Activated CD4-positive, alpha-beta T cell treated with anti-CD3 and anti-CD28 coated beads for 36 hours (primary cell): ENCODE measurements at regions of chr11 and their contacts with region 1.

Region 1: DNA sequence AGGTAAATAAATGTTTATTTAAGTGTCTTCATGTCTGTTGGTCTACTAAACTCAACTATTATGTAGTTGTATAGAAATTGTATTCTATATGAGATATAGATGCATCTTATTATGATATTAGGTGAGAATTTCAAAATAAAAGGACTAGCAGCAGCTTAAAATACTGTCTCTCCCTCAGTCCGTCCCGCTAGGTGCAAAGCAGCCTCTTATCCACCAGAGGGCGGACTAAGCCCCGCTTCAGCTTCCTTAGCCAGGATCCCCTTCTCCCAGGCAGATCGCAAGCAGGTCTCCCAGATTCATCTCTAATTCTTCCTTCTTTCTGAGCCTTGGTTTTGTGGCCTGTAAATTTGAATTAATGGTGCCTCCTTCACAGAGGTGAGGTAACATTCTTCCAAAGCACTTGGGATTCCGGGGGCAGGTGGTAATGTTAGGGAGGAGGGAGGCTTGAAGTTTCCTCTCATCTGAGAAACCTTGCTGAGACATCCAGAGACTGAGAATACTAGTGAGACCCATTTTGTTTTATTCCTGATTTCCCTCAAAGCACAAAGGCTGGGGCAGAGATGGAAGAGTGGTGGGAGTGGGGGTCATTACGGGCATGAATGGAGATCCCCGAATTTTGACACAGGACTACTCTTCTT is 13.5 kb upstream of the INSC start:
- DNase-seq: peak; percentile 74
- ATAC-seq: peak; percentile 79
- H3K4me3 Mint-ChIP-seq: no peak overlapping the region
- H3K27ac Mint-ChIP-seq: no peak overlapping the region
- H3K4me1 Mint-ChIP-seq: peaks cover 3% of the 10 kb centered on the region
- H3K27me3 Mint-ChIP-seq: peaks cover 17% of the 10 kb centered on the region

Region 2: GRCh38 chr11:14741195-14741594 is 360.0 kb before region 1 on chr11:
- CTCF ChIA-PET with region 1: no interaction called
- POLR2A ChIA-PET with region 1: no interaction called
- intact Hi-C with region 1: no loop called
- DNase-seq: no peak
- ATAC-seq: no peak
- H3K4me3 Mint-ChIP-seq: no peak overlapping the region
- H3K27ac Mint-ChIP-seq: no peak overlapping the region
- H3K4me1 Mint-ChIP-seq: peaks cover 43% of the 10 kb centered on the region
- H3K27me3 Mint-ChIP-seq: no peaks in the 10 kb centered on the region

Region 3: GRCh38 chr11:15139958-15140659 is 38.9 kb after region 1 on chr11:
- CTCF ChIA-PET with region 1: interaction called, 13 read pairs
- POLR2A ChIA-PET with region 1: no interaction called
- intact Hi-C with region 1: no loop called
- DNase-seq: no peak
- ATAC-seq: no peak
- H3K4me3 Mint-ChIP-seq: no peak overlapping the region
- H3K27ac Mint-ChIP-seq: no peak overlapping the region
- H3K4me1 Mint-ChIP-seq: no peaks in the 10 kb centered on the region
- H3K27me3 Mint-ChIP-seq: no peaks in the 10 kb centered on the region

Region 4: GRCh38 chr11:15159085-15159484 is 57.9 kb after region 1 on chr11:
- CTCF ChIA-PET with region 1: interaction called, 4 read pairs
- POLR2A ChIA-PET with region 1: no interaction called
- intact Hi-C with region 1: loop called (anchors 1 to 5 kb)
- DNase-seq: no peak
- ATAC-seq: no peak
- H3K4me3 Mint-ChIP-seq: no peak overlapping the region
- H3K27ac Mint-ChIP-seq: no peak overlapping the region
- H3K4me1 Mint-ChIP-seq: no peaks in the 10 kb centered on the region
- H3K27me3 Mint-ChIP-seq: peaks cover 4% of the 10 kb centered on the region

Region 5: GRCh38 chr11:15216678-15217077 is 115.5 kb after region 1 on chr11:
- CTCF ChIA-PET with region 1: interaction called, 31 read pairs
- POLR2A ChIA-PET with region 1: no interaction called
- intact Hi-C with region 1: no loop called
- DNase-seq: peak; percentile 29
- ATAC-seq: no peak
- H3K4me3 Mint-ChIP-seq: no peak overlapping the region
- H3K27ac Mint-ChIP-seq: no peak overlapping the region
- H3K4me1 Mint-ChIP-seq: no peaks in the 10 kb centered on the region
- H3K27me3 Mint-ChIP-seq: no peaks in the 10 kb centered on the region

Region 6: GRCh38 chr11:15223318-15223717 is 122.1 kb after region 1 on chr11:
- CTCF ChIA-PET with region 1: interaction called, 13 read pairs
- POLR2A ChIA-PET with region 1: no interaction called
- intact Hi-C with region 1: no loop called
- DNase-seq: no peak
- ATAC-seq: no peak
- H3K4me3 Mint-ChIP-seq: no peak overlapping the region
- H3K27ac Mint-ChIP-seq: no peak overlapping the region
- H3K4me1 Mint-ChIP-seq: no peaks in the 10 kb centered on the region
- H3K27me3 Mint-ChIP-seq: no peaks in the 10 kb centered on the region